ENCODE measurements at regions of chr3 and their contacts with region 1.

Region 1: DNA sequence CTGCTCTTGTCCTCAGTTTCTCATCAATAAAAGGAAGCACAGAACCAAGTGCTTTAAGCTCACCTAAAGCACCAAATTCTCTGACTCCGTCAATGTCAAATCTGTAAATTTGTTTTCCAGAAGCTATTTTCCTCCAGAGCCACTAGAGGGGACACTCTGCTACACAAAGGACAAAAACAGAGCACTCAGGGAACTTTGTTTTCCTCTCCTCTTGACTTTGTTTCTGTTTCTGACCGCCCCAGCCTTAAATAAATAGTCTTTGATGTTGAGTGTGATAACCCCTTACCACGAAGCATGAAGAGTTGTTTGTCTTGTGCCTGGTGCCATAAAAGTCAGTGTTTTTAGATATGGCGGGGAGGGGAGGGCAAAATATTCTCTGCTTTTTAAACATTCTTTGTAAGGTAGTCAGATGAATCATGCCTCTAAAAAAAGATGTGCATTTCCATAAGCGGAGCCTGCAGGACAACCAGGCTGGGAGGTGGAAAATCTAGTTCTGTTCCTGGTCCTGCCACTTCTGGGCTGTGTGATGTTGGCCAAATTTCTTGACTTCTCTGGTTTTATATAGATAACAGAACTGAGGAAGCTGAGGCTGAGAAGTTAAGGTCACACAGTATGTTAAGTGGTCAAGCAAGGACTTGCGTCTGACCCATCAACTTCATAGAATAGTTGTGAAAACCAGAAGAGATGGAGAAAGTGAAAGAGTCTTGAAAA is 7.3 kb upstream of the ZBTB38 start:
- DNase-seq: no peak

Region 2: GRCh38 chr3:141311496-141312353 is 49.3 kb before region 1 on chr3:
- intact Hi-C with region 1: loop called (anchors 5 kb)
- DNase-seq: peak; percentile 97 to 100 (median 99)

Region 3: GRCh38 chr3:141412087-141412935 is 51.3 kb after region 1 on chr3:
- intact Hi-C with region 1: no loop called
- DNase-seq: peak in 5 of 10 donors; percentile 39 to 58 (median 41)

Measured in posterior cingulate gyrus (tissue), 11 donors.